ENCODE measurements at regions of chr1 and their contacts with region 1.

Region 1: DNA sequence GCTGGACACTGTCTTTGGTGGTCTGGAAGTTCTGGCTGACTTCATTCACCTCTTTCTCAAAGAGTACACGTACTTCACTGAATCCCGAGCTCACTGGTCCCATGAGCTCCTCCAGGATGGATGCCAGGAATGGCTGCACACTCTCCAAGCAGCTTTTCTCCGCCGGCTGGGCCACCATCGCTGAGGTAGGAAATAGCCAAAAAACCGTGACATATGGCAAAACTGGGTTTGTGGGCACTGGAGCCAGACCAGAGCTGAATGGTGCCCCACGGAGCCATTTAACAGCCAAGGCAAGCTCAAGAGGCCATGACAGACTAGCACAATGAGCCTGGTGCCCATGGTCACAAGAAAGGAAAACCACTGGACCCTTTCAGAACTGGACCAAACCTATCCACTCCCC is 64.0 kb upstream of the EDEM3 start:
- DNase-seq: no peak
- H3K4me3 ChIP-seq: no peak overlapping the region
- CTCF ChIP-seq: no peak
- POLR2A ChIP-seq: no peak

Region 2: GRCh38 chr1:184366997-184367396 is 451.6 kb before region 1 on chr1:
- intact Hi-C with region 1: no loop called
- DNase-seq: no peak
- H3K4me3 ChIP-seq: no peak overlapping the region
- CTCF ChIP-seq: no peak
- POLR2A ChIP-seq: no peak

Region 3: GRCh38 chr1:184605941-184606340 is 212.7 kb before region 1 on chr1:
- intact Hi-C with region 1: no loop called
- DNase-seq: no peak
- H3K4me3 ChIP-seq: no peak overlapping the region
- CTCF ChIP-seq: no peak
- POLR2A ChIP-seq: no peak

Region 4: DNA sequence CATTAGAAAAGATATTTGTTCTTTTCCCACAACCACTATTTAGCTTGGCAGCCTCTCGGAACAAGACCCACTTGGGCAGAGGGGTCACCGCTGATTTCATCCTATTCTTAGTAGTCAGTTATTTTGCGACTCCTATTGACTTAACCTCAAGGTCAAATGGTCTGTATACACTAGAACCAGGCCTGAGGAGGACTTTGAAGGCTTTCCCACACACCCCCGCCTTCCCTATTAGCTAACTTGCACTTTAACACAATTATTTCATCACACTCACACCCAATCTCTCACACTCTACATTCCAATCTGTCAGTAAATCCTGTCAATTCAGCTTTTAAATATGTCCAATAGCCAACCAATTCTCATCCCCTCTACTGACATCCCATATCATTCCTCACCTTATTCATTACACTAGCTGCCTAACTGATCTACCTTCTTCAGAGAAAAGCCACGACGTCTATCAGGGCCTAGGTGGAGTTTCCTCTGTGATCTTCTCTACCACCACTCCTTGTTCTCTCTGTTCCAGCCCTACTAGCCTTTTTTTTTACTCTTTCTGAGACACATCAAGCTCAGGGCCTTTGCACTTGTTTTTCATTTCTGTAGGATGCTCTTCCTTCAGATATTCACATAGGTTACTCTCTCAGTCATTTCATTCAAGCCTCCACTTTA is 156.7 kb after region 1 on chr1:
- intact Hi-C with region 1: loop called (anchors 5 kb)
- DNase-seq: no peak
- H3K4me3 ChIP-seq: no peak overlapping the region
- CTCF ChIP-seq: no peak
- POLR2A ChIP-seq: no peak